ENCODE measurements at regions of chr5 and their contacts with region 1.

Region 1: DNA sequence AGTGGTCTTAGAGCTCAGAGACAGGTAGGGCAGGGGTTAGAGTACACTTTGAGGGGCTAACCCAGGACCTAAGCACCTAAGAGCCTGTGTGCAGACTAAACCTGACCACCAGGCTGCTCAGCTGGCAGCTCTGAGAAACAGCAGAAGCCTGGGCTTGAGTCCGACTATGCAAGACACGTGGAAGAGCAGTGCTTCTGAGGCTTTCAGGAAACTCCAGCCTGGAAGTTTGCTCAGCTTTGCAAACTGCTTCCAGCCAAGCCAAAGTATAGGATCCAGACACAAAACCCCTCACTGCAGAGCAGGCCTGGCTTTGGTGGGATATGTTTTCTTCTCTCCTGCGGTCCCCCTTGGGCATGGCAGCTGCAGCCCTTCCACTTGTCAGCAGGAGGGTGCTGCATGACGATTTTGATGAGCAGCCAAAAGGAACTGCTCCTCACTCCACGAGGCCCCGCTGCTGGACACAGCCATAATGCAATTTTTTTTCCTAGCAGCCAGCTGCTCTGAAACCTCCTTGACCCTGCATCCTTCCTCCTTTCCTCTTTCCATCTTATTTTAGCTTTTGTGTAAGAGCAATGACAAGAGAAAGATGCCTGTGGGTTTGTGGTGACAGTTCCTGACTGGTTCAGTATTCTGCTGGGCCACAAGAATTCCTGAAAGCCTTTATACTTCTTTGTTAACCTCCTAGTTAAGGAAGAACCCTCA is 123.1 kb downstream of the LIFR start:
- DNase-seq: peak; percentile 87
- ATAC-seq: peak; percentile 82
- H3K4me3 ChIP-seq: no peak overlapping the region
- H3K27ac ChIP-seq: peak overlapping the region; percentile 44; the same call in 1 of the 2 replicates
- H3K4me1 ChIP-seq: peaks cover 24% of the 10 kb centered on the region
- H3K27me3 ChIP-seq: peaks cover 2% of the 10 kb centered on the region; the same call in 1 of the 2 replicates
- CTCF ChIP-seq: no peak
- POLR2A ChIP-seq: no peak
- RAD21 ChIP-seq: no peak

Region 2: DNA sequence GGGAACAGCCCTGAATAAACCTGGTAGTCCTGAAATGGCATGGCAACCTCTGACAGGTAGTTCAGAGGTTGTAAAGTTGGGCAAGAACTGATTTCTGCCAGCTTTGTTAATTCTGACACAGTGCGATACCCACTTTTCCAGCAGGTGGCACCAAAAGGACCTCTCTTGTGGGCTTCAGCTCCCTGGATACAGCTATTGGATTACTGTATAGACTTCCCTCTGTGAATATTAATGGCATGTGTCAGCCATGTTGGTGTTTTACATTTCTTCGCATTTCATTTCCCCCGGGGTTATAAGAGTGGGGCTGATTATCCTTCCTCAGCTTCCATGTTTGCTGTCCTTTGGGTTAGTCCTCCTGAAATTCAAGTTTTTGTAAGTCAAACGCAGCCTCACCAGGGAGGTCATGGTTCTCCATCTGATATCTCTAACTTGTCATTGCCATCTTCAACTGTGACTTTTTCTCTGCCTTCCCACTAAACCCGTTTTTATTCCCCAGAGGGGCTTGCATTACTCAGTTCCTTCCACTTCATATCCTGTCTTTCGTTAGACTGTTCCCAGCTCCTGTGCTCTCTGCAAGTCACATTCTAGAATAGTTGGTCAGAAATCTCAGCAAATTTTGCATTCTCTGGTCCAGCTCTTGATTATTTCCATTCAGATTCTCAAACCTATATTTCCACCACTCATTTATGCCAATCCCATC is 12.5 kb before region 1 on chr5:
- CTCF ChIA-PET with region 1: interaction called, 11 read pairs
- POLR2A ChIA-PET with region 1: no interaction called
- dilution Hi-C with region 1: no loop called
- in situ Hi-C with region 1: no loop called
- intact Hi-C with region 1: no loop called
- DNase-seq: peak; percentile 69
- ATAC-seq: peak; percentile 85
- H3K4me3 ChIP-seq: no peak overlapping the region
- H3K27ac ChIP-seq: no peak overlapping the region
- H3K4me1 ChIP-seq: peaks cover 10% of the 10 kb centered on the region
- H3K27me3 ChIP-seq: peaks cover 5% of the 10 kb centered on the region; the same call in 1 of the 2 replicates
- CTCF ChIP-seq: peak; percentile 75
- POLR2A ChIP-seq: no peak
- RAD21 ChIP-seq: peak; percentile 75